Caco-2 (cell line): ENCODE measurements at regions of chr3 and their contacts with region 1.

Region 1: DNA sequence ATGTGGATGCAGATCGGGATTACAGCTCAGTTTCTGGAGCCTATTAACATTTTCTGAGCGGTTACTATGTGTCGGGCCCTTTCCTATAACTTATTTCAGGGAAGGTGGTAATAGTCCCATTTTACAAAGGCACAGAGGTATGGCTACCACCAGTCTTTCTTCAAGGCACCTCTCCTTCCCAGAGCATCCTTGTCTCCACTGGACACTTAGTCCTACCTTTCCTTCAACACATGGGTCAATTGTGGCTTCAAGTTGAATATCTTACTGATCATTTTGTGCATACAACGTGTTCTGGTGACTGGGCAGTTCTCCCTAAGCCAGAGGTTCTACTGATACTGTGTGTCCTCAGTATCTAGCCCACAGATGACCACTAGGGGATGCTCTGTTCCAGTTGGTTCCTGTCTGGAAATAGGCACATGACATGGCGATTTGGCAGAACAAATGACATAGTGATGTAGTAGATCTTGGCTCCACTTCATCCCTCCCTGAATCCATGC is 60.7 kb upstream of the CMTM8 start:
- DNase-seq: peak; percentile 83 to 86
- H3K4me3 ChIP-seq: peak overlapping the region; percentile 6; the same call in 1 of the 2 replicates
- H3K4me3 Mint-ChIP-seq: peak overlapping the region; percentile 35
- H3K27ac Mint-ChIP-seq: peak overlapping the region; percentile 5
- H3K4me1 ChIP-seq: 0 out of 2 replicates have a peak, but pooled peaks cover 5% of the 10 kb centered on the region
- H3K4me1 Mint-ChIP-seq: peaks cover 11% of the 10 kb centered on the region
- H3K27me3 ChIP-seq: no peaks in the 10 kb centered on the region
- H3K27me3 Mint-ChIP-seq: no peaks in the 10 kb centered on the region
- CTCF ChIP-seq: peak; percentile 81 to 99

Region 2: GRCh38 chr3:32194653-32195052 is 16.9 kb after region 1 on chr3:
- CTCF ChIA-PET with region 1: no interaction called
- POLR2A ChIA-PET with region 1: no interaction called
- intact Hi-C with region 1: no loop called
- DNase-seq: no peak
- H3K4me3 ChIP-seq: no peak overlapping the region
- H3K4me3 Mint-ChIP-seq: no peak overlapping the region
- H3K27ac Mint-ChIP-seq: no peak overlapping the region
- H3K4me1 ChIP-seq: no peaks in the 10 kb centered on the region
- H3K4me1 Mint-ChIP-seq: no peaks in the 10 kb centered on the region
- H3K27me3 ChIP-seq: no peaks in the 10 kb centered on the region
- H3K27me3 Mint-ChIP-seq: no peaks in the 10 kb centered on the region
- CTCF ChIP-seq: no peak

Region 3: GRCh38 chr3:32216172-32216783 is 38.5 kb after region 1 on chr3:
- CTCF ChIA-PET with region 1: no interaction called
- POLR2A ChIA-PET with region 1: no interaction called
- intact Hi-C with region 1: loop called (anchors 1 kb)
- DNase-seq: peak; percentile 90
- H3K4me3 ChIP-seq: no peak overlapping the region
- H3K4me3 Mint-ChIP-seq: peak overlapping the region; percentile 71
- H3K27ac Mint-ChIP-seq: peak overlapping the region; percentile 91
- H3K4me1 ChIP-seq: peaks cover 28% of the 10 kb centered on the region
- H3K4me1 Mint-ChIP-seq: peaks cover 7% of the 10 kb centered on the region
- H3K27me3 ChIP-seq: no peaks in the 10 kb centered on the region
- H3K27me3 Mint-ChIP-seq: no peaks in the 10 kb centered on the region
- CTCF ChIP-seq: no peak

Region 4: DNA sequence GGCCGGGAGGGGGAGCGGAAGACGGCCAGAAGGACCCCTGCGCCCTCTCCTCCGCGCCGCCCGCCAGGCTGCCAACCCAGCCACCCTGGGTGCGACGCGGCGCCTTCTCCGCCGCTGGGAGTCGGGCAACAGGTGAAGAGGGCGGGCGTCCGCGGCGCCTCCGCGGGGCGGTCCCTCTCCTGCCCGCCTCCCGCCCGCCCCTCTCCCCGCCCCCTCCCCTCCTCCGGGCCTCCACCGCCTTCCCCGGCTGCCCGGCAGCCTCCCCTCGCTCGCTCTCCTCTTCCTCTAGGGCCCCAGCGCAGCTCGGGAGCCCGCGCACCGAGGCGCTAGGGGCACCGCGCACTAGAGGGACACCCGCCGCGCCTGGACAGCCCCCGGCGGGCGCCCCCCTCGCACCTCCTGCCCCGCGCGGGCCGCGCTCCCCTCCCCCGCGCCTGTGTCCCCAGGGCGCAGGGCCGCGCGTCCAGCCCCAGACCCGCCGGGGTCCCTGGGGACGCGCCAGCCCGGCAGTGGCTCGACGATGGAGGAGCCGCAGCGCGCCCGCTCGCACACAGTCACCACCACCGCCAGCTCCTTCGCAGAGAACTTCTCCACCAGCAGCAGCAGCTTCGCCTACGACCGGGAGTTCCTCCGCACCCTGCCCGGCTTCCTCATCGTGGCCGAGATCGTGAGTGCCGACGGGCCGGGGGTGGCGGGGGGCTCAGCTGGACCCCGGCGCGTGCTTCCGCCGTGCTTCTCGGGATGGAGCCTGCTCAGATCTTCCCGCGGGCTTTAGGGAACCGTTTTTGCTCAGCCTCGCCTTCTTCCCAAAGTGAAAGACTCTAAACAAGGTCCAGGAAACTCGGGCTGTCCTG is 60.9 kb after region 1 on chr3 and contains the start of gene CMTM8:
- CTCF ChIA-PET with region 1: interaction called, 15 read pairs
- POLR2A ChIA-PET with region 1: no interaction called
- intact Hi-C with region 1: loop called (anchors 1 kb)
- DNase-seq: peak; percentile 74 to 83
- H3K4me3 ChIP-seq: peak within 1 kb of the TSS; percentile 87
- H3K4me3 Mint-ChIP-seq: peak within 1 kb of the TSS; percentile 97
- H3K27ac Mint-ChIP-seq: peak within 1 kb of the TSS; percentile 88
- H3K4me1 ChIP-seq: peaks cover 14% of the 10 kb centered on the region
- H3K4me1 Mint-ChIP-seq: peaks cover 20% of the 10 kb centered on the region
- H3K27me3 ChIP-seq: no peaks in the 10 kb centered on the region
- H3K27me3 Mint-ChIP-seq: no peaks in the 10 kb centered on the region
- CTCF ChIP-seq: no peak
- total RNA-seq, gene CMTM8: 28.2 and 28.5 TPM in 2 replicates

Region 5: GRCh38 chr3:32296256-32297204 is 118.8 kb after region 1 on chr3:
- CTCF ChIA-PET with region 1: interaction called, 3 read pairs
- POLR2A ChIA-PET with region 1: no interaction called
- intact Hi-C with region 1: loop called (anchors 1 kb)
- DNase-seq: peak; percentile 53 to 62
- H3K4me3 ChIP-seq: no peak overlapping the region
- H3K4me3 Mint-ChIP-seq: no peak overlapping the region
- H3K27ac Mint-ChIP-seq: peak overlapping the region; percentile 33
- H3K4me1 ChIP-seq: peaks cover 47% of the 10 kb centered on the region
- H3K4me1 Mint-ChIP-seq: peaks cover 17% of the 10 kb centered on the region
- H3K27me3 ChIP-seq: no peaks in the 10 kb centered on the region
- H3K27me3 Mint-ChIP-seq: no peaks in the 10 kb centered on the region
- CTCF ChIP-seq: peak; percentile 78 to 82

Region 6: DNA sequence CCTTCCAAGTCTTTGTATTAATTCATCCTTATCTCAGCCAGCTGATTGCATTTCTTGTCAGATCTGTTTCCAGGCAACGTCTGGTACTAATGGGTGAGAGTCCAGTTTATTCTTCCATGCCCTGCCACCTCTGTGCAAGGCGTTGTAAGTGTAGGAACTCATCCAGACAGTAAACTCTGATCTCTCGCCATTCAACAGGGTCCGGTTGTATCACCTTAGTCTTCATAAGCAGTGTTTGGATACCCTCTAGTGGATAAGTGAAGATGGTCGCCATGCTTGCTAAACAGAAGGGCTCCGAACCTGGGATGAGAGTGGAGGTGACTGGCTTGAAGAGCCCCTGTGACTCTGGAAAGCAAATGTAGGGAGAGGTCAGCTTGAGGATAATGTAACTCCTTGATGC is 162.3 kb after region 1 on chr3:
- CTCF ChIA-PET with region 1: interaction called, 4 read pairs
- POLR2A ChIA-PET with region 1: no interaction called
- intact Hi-C with region 1: loop called (anchors 1 kb)
- DNase-seq: peak; percentile 67 to 68
- H3K4me3 ChIP-seq: no peak overlapping the region
- H3K4me3 Mint-ChIP-seq: no peak overlapping the region
- H3K27ac Mint-ChIP-seq: no peak overlapping the region
- H3K4me1 ChIP-seq: peaks cover 9% of the 10 kb centered on the region
- H3K4me1 Mint-ChIP-seq: peaks cover 6% of the 10 kb centered on the region
- H3K27me3 ChIP-seq: no peaks in the 10 kb centered on the region
- H3K27me3 Mint-ChIP-seq: no peaks in the 10 kb centered on the region
- CTCF ChIP-seq: peak; percentile 49 to 71

Region 7: GRCh38 chr3:32401556-32402081 is 223.9 kb after region 1 on chr3:
- CTCF ChIA-PET with region 1: no interaction called
- POLR2A ChIA-PET with region 1: no interaction called
- intact Hi-C with region 1: loop called (anchors 1 kb)
- DNase-seq: peak; percentile 44 to 59
- H3K4me3 ChIP-seq: peak overlapping the region; percentile 33
- H3K4me3 Mint-ChIP-seq: peak overlapping the region; percentile 62
- H3K27ac Mint-ChIP-seq: peak overlapping the region; percentile 55
- H3K4me1 ChIP-seq: peaks cover 15% of the 10 kb centered on the region; the same call in 1 of the 2 replicates
- H3K4me1 Mint-ChIP-seq: peaks cover 25% of the 10 kb centered on the region
- H3K27me3 ChIP-seq: no peaks in the 10 kb centered on the region
- H3K27me3 Mint-ChIP-seq: no peaks in the 10 kb centered on the region
- CTCF ChIP-seq: no peak

Region 8: DNA sequence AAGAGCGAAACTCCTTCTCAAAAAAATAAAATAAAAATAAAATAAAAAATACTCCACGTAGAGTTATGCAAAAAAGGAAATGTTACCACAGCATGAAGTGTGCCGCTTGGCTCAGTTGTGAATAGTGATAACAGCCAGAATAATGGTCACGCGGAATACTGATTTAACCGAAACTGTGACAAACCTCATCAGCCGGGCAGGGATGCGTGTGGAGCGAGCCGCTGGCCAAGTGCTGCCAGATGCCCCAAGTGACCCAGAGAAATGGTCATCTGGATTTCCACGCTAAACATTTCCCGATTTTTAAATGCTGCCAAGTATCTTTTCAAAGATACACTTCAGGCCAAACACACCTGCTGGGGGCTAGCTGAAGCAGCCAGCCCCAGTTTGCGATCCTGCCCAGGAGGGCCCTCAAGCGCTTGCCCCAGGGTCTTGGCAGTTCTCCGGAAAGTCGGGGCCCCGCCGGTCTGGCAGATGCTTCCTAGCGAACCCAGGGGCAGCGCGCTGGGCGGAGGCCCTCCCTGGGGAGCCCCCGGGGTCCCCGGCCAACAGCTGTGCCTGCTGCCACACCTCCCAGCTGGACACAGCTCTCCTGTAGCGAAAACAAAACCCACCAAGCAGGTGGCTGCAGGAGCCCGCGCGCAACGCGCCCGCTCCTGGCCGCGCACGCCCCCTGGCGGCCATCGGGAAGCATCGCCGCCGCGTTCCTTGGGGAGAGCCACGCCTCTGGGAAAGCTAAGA is 289.8 kb after region 1 on chr3:
- CTCF ChIA-PET with region 1: no interaction called
- POLR2A ChIA-PET with region 1: no interaction called
- intact Hi-C with region 1: loop called (anchors 5 kb)
- DNase-seq: peak in 1 of 2 experiments; percentile 53
- H3K4me3 ChIP-seq: no peak overlapping the region
- H3K4me3 Mint-ChIP-seq: no peak overlapping the region
- H3K27ac Mint-ChIP-seq: no peak overlapping the region
- H3K4me1 ChIP-seq: peaks cover 9% of the 10 kb centered on the region; the same call in 1 of the 2 replicates
- H3K4me1 Mint-ChIP-seq: no peaks in the 10 kb centered on the region
- H3K27me3 ChIP-seq: no peaks in the 10 kb centered on the region; the same call in 1 of the 2 replicates
- H3K27me3 Mint-ChIP-seq: no peaks in the 10 kb centered on the region
- CTCF ChIP-seq: peak; percentile 29 to 52